Activated CD4-positive, alpha-beta T cell treated with anti-CD3 and anti-CD28 coated beads, Interleukin-2, amount 10 ng/mL, durations not matched to agents 24 days and 14 days (primary cell): ENCODE measurements at regions of chr2 and their contacts with region 1.

Region 1: DNA sequence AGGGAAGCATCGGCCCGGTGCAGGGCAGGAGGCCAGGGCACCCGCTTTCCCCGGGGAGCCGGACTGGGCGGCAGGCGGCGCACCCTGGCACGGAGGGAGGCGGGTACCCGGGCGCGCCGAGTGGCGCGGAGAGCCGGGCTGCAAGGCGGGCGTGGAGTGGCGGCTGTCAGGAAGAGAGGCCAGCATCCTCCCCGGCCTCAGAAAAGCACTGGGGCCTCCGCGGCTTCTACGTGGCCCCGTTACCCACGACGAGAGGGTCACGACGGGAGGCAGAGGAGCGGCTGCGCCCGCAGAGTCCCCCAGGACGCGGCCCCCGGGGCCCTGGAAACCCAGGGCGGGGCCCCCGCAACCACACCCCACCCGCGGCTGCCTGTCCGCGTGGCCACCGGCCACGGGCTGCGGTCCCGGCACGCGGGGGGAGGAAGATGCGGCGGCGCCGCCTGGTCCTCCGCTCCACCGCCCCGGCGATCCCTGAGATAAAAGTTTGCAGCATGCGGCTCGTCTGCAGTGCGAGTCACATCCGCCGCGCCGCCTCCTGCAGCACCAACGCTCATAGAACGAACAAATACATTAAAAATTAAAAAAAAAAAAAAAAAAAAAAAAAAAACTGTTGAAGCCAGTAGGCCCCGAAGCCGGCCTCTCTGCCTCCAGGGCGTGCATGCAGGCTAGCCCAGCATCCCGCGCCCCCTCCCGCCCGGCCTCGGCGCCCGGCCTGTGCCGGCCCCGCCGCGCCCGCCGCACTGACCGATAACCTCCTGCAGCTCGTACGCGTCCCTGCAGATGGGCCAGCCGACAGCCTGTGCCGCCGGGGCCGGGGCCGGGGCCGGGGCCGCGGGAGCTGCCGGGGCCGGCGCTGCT is 683 bp downstream of the STK39 start:
- DNase-seq: peak; percentile 94
- H3K4me3 Mint-ChIP-seq: peak overlapping the region; percentile 88
- H3K27ac Mint-ChIP-seq: peak overlapping the region; percentile 94
- H3K4me1 Mint-ChIP-seq: peaks cover 32% of the 10 kb centered on the region
- H3K27me3 Mint-ChIP-seq: peaks cover 7% of the 10 kb centered on the region

Region 2: DNA sequence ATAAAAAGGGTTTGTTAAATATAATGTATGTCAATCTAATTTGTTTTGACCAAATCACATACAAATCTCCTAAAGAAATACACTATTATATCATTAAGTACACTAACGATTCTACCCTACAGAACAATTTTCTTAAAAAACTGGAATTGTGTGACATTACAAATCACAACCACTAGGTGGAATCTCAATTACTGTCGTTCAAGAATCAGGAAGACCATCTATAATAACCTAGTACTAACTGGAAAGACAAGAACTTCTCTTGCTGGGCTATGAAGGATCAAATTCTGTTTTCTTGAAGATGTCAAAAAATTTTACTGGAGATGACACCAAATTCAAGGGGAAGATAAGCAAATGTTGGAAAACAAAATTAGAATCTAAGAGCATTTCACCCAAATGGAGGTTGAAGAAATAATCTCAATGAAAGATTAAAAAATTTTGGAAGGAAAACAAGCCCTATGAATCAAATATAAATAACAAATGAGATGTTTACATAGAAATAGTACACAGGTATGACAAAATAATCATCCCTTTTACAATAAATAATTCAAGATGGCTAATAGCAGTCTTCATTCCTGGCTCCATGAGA is 110.2 kb before region 1 on chr2:
- intact Hi-C with region 1: loop called (anchors 2 kb)
- DNase-seq: no peak
- H3K4me3 Mint-ChIP-seq: no peak overlapping the region
- H3K27ac Mint-ChIP-seq: no peak overlapping the region
- H3K4me1 Mint-ChIP-seq: peaks cover 6% of the 10 kb centered on the region
- H3K27me3 Mint-ChIP-seq: no peaks in the 10 kb centered on the region

Region 3: GRCh38 chr2:168194784-168195522 is 51.8 kb before region 1 on chr2:
- intact Hi-C with region 1: loop called (anchors 1 kb)
- DNase-seq: peak; percentile 75
- H3K4me3 Mint-ChIP-seq: peak overlapping the region; percentile 71
- H3K27ac Mint-ChIP-seq: peak overlapping the region; percentile 92
- H3K4me1 Mint-ChIP-seq: peaks cover 48% of the 10 kb centered on the region
- H3K27me3 Mint-ChIP-seq: no peaks in the 10 kb centered on the region

Region 4: GRCh38 chr2:168210895-168211570 is 35.7 kb before region 1 on chr2:
- intact Hi-C with region 1: loop called (anchors 1 kb)
- DNase-seq: no peak
- H3K4me3 Mint-ChIP-seq: peak overlapping the region; percentile 41
- H3K27ac Mint-ChIP-seq: peak overlapping the region; percentile 85
- H3K4me1 Mint-ChIP-seq: peaks cover 50% of the 10 kb centered on the region
- H3K27me3 Mint-ChIP-seq: no peaks in the 10 kb centered on the region

Region 5: GRCh38 chr2:168233762-168234406 is 12.8 kb before region 1 on chr2:
- intact Hi-C with region 1: loop called (anchors 1 kb)
- DNase-seq: no peak
- H3K4me3 Mint-ChIP-seq: peak overlapping the region; percentile 18
- H3K27ac Mint-ChIP-seq: peak overlapping the region; percentile 60
- H3K4me1 Mint-ChIP-seq: peaks cover 21% of the 10 kb centered on the region
- H3K27me3 Mint-ChIP-seq: no peaks in the 10 kb centered on the region

Region 6: DNA sequence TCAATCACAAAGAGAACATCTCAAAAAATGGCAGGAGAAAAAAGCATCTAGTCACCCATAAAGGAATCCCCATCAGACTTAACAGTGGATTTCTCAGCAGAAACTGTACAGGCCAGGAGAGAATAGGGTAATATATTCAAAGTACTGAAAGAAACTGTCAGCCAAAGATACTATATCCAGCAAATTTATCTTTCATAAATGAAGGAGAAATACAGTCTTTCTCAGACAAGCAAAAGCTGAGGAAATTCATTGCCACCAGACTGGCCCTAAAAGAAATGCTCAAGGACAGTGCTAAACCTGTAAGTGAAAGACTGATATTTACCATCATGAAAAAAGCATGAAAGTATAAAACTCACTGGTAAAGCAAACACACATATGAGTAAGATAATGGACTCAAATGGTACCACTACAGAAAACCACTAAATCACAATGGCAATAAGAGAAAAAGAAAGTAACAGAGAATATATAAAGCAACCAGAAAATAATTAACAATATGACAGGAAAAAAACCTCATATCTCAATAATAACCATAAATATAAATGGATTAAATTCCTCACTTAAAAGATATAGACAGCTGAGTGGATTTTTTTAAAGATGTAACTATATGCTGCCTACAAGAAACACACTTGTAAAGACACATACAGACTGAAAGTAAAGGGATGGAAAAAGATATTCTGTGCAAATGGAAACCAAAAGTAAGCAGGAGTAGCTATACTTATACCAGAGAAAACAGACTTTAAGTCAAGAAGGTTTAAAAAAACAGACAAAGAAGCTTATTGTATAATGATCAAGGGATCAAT is 84.1 kb after region 1 on chr2:
- intact Hi-C with region 1: loop called (anchors 5 kb)
- DNase-seq: no peak
- H3K4me3 Mint-ChIP-seq: no peak overlapping the region
- H3K27ac Mint-ChIP-seq: peak overlapping the region; percentile 2
- H3K4me1 Mint-ChIP-seq: peaks cover 4% of the 10 kb centered on the region
- H3K27me3 Mint-ChIP-seq: no peaks in the 10 kb centered on the region

Region 7: GRCh38 chr2:168455648-168456520 is 209.2 kb after region 1 on chr2 and contains the start of gene CERS6:
- intact Hi-C with region 1: loop called (anchors 1 kb)
- DNase-seq: peak; percentile 96
- H3K4me3 Mint-ChIP-seq: no peak within 1 kb of the TSS
- H3K27ac Mint-ChIP-seq: peak within 1 kb of the TSS; percentile 85
- H3K4me1 Mint-ChIP-seq: peaks cover 25% of the 10 kb centered on the region
- H3K27me3 Mint-ChIP-seq: no peaks in the 10 kb centered on the region
- total RNA-seq, gene CERS6: 25.3 and 26.3 TPM in 2 replicates